ENCODE measurements at regions of chr5 and their contacts with region 1.

Region 1: GRCh38 chr5:78328585-78329173 is 31.7 kb upstream of the SCAMP1 start:
- DNase-seq: no peak
- H3K4me3 ChIP-seq: no peak overlapping the region
- H3K27ac ChIP-seq: peak overlapping the region; percentile 45
- H3K4me1 ChIP-seq: peaks cover 22% of the 10 kb centered on the region
- H3K27me3 ChIP-seq: no peaks in the 10 kb centered on the region
- CTCF ChIP-seq: no peak

Region 2: GRCh38 chr5:78162253-78162862 is 166.3 kb before region 1 on chr5:
- CTCF ChIA-PET with region 1: no interaction called
- POLR2A ChIA-PET with region 1: no interaction called
- intact Hi-C with region 1: no loop called
- DNase-seq: no peak
- H3K4me3 ChIP-seq: no peak overlapping the region
- H3K27ac ChIP-seq: no peak overlapping the region
- H3K4me1 ChIP-seq: no peaks in the 10 kb centered on the region
- H3K27me3 ChIP-seq: no peaks in the 10 kb centered on the region
- CTCF ChIP-seq: peak; percentile 64

Region 3: DNA sequence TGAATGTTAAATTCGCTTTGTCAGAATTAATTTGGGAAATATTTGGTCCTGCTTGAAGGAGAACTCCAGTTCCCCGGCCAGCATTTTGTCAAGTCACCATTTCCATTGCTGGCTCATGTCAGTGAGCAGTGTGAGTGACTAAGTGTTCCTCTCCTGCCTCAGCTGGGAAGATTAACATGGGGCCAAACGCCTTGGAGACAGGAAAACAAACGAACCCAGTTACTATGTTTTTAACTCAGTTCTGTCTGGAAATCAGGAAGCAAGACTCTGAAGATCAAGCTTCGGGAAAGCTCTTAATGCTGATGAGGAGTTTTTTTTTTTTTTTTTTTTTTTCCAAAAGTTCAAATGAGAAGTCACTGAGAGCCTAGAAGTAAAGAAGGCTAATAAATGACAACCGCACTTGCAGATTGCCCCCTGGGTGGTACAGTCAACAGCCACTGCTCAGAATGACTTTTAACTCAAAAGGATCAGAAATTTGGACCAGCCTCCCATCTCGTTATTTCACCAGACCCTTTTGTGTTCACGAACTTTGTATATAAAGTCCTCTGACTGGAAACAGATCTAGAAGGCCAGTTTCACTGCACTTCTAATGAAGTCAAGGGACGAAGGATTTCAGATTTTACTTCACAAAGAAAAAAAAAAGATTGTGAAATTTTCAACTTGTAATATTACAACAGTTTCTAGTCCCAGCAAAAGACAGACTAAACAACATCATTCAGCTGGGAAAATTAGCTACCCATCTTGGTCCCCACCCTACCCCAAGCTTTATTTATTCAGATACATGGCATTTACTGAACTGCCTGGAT is 198.6 kb after region 1 on chr5:
- CTCF ChIA-PET with region 1: no interaction called
- POLR2A ChIA-PET with region 1: interaction called, 12 read pairs
- intact Hi-C with region 1: no loop called
- DNase-seq: peak in 1 of 2 experiments; percentile 70
- H3K4me3 ChIP-seq: no peak overlapping the region
- H3K27ac ChIP-seq: no peak overlapping the region
- H3K4me1 ChIP-seq: peaks cover 46% of the 10 kb centered on the region
- H3K27me3 ChIP-seq: no peaks in the 10 kb centered on the region
- CTCF ChIP-seq: no peak

Region 4: GRCh38 chr5:78586251-78586650 is 257.6 kb after region 1 on chr5:
- CTCF ChIA-PET with region 1: no interaction called
- POLR2A ChIA-PET with region 1: no interaction called
- intact Hi-C with region 1: loop called (anchors 5 kb)
- DNase-seq: peak; percentile 63 to 86
- H3K4me3 ChIP-seq: no peak overlapping the region
- H3K27ac ChIP-seq: peak overlapping the region; percentile 64
- H3K4me1 ChIP-seq: peaks cover 41% of the 10 kb centered on the region
- H3K27me3 ChIP-seq: no peaks in the 10 kb centered on the region
- CTCF ChIP-seq: no peak

Region 5: DNA sequence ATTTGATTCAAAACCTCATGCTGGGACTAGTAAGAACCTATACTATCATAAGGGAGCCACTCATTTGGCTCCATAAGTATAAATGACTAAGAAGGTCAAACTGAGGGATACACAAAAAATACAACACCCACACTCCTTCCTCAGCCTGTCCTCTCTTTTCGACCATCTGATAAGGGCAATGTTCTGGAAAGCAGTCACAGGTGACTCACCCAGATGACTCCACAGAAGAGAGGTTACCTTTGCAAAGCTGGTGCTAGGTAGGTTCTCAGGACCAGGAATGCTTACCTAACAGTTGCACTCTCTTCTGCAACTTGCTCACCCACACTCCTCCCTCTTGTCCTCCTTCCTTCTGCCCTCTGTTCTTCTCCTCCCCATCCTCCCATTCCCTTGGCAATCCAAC is 287.0 kb after region 1 on chr5:
- CTCF ChIA-PET with region 1: no interaction called
- POLR2A ChIA-PET with region 1: interaction called, 11 read pairs
- intact Hi-C with region 1: no loop called
- DNase-seq: peak; percentile 45 to 89
- H3K4me3 ChIP-seq: no peak overlapping the region
- H3K27ac ChIP-seq: peak overlapping the region; percentile 64
- H3K4me1 ChIP-seq: peaks cover 20% of the 10 kb centered on the region
- H3K27me3 ChIP-seq: no peaks in the 10 kb centered on the region
- CTCF ChIP-seq: no peak